Naive thymus-derived CD4-positive, alpha-beta T cell (primary cell): ENCODE measurements at regions of chr4 and their contacts with region 1.

Region 1: GRCh38 chr4:78100060-78100459 is 42.9 kb downstream of the FRAS1 start:
- DNase-seq: no peak
- ATAC-seq: no peak
- H3K4me3 ChIP-seq: no peak overlapping the region
- H3K4me3 Mint-ChIP-seq: no peak overlapping the region
- H3K27ac ChIP-seq: no peak overlapping the region
- H3K27ac Mint-ChIP-seq: no peak overlapping the region
- H3K4me1 ChIP-seq: no peaks in the 10 kb centered on the region
- H3K4me1 Mint-ChIP-seq: no peaks in the 10 kb centered on the region
- H3K27me3 ChIP-seq: no peaks in the 10 kb centered on the region
- H3K27me3 Mint-ChIP-seq: peaks cover 3 to 11% (median 3%) of the 10 kb centered on the region in 5 donors

Region 2: DNA sequence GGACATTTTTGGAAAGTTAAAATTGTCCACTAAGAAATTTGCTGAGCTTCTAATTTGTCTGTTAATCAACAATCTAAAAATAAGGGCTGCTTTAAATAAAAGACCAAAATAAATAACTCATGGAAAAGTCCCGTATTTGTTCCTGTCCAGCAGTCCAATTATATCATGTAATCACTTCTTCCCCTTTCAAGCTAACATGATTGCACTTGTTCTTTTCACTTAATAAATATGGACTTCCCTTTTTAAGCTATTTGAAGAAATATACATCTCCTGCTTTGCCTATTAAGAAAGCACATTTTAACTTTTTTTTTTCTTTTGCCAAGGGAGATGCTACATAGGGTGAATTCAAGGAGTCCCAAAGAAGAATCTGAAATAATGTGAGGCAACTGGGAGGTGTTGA is 98.5 kb before region 1 on chr4:
- CTCF ChIA-PET with region 1: interaction called, 10 read pairs
- POLR2A ChIA-PET with region 1: no interaction called
- intact Hi-C with region 1: no loop called
- DNase-seq: no peak
- ATAC-seq: no peak
- H3K4me3 ChIP-seq: no peak overlapping the region
- H3K4me3 Mint-ChIP-seq: no peak overlapping the region
- H3K27ac ChIP-seq: no peak overlapping the region
- H3K27ac Mint-ChIP-seq: no peak overlapping the region
- H3K4me1 ChIP-seq: no peaks in the 10 kb centered on the region
- H3K4me1 Mint-ChIP-seq: peaks cover 0 to 1% (median 0%) of the 10 kb centered on the region in 7 donors
- H3K27me3 ChIP-seq: no peaks in the 10 kb centered on the region
- H3K27me3 Mint-ChIP-seq: peaks cover 0 to 14% (median 12%) of the 10 kb centered on the region in 5 donors

Region 3: DNA sequence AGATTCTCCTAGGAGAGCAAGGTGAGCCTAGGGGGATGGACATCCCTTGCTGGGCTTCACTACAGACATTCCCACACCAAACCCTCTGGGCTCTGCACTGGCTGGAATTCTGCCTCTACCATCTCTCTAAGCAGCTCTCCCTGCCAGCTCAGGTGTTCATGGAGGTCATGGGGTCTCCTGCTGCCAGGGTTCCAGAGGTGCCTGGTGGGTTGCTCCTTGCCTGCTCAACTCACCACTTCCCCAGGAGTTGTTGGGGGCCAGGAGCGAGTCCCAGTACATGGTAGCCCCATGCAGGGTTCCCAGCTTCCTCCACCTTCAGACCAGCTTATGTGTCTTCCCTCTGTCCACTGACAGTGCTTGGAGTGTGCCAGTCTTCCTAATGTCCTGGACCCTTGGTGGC is 1007.0 kb after region 1 on chr4:
- CTCF ChIA-PET with region 1: no interaction called
- POLR2A ChIA-PET with region 1: no interaction called
- intact Hi-C with region 1: no loop called
- DNase-seq: no peak
- ATAC-seq: no peak
- H3K4me3 ChIP-seq: no peak overlapping the region
- H3K4me3 Mint-ChIP-seq: no peak overlapping the region
- H3K27ac ChIP-seq: no peak overlapping the region
- H3K27ac Mint-ChIP-seq: no peak overlapping the region
- H3K4me1 ChIP-seq: no peaks in the 10 kb centered on the region
- H3K4me1 Mint-ChIP-seq: no peaks in the 10 kb centered on the region
- H3K27me3 ChIP-seq: no peaks in the 10 kb centered on the region
- H3K27me3 Mint-ChIP-seq: peaks cover 0 to 7% (median 3%) of the 10 kb centered on the region in 5 donors